Tibial artery (tissue), 4 donors: ENCODE measurements at regions of chr20 and their contacts with region 1.

Region 1: GRCh38 chr20:19692685-19693119 is 65.4 kb upstream of the RIN2 start:
- DNase-seq: peak in 1 of 2 donors; percentile 32
- H3K4me3 ChIP-seq: no peak overlapping the region
- H3K27ac ChIP-seq: no peak overlapping the region
- H3K4me1 ChIP-seq: peaks cover 0 to 15% (median 2%) of the 10 kb centered on the region in 4 donors
- H3K27me3 ChIP-seq: no peaks in the 10 kb centered on the region
- CTCF ChIP-seq: peak; percentile 86 to 93

Region 2: DNA sequence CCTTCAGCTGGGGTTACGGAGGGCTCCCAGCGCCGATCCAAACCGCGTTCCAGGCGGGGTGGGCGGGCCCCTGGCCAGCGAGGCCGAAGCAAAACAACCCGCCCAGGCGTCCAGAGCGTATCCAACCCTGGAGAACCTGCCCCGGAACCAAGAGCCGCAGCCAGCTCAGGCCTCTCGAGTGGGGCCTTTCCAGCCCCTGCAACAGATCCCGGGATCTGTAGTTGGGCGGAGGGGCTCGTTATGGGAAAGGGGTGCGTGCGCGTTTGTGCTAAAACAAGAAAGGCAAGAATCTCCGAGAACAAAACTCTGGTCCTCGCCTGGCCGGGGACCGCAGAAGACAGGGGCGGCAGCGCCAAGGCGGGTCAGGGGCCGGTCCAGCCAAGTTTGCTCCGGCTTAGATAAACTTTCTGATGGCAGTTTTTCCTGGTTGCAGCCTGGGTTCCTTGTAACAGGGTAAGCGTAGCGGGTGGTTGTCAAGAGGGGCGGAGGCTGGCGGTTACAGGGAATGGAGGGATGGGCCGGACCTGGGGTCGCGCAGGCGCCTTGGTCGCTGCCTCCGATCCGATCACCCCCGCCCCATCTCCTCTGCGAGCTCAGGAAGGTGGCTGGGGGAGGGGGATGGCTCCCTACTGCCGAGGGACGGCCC is 64.9 kb after region 1 on chr20:
- intact Hi-C with region 1: loop called (anchors 5 kb)
- DNase-seq: peak; percentile 92 to 95
- H3K4me3 ChIP-seq: peak overlapping the region; percentile 80 to 85
- H3K27ac ChIP-seq: peak overlapping the region; percentile 94 to 98
- H3K4me1 ChIP-seq: peaks cover 0 to 38% (median 25%) of the 10 kb centered on the region in 4 donors
- H3K27me3 ChIP-seq: no peaks in the 10 kb centered on the region
- CTCF ChIP-seq: no peak

Region 3: DNA sequence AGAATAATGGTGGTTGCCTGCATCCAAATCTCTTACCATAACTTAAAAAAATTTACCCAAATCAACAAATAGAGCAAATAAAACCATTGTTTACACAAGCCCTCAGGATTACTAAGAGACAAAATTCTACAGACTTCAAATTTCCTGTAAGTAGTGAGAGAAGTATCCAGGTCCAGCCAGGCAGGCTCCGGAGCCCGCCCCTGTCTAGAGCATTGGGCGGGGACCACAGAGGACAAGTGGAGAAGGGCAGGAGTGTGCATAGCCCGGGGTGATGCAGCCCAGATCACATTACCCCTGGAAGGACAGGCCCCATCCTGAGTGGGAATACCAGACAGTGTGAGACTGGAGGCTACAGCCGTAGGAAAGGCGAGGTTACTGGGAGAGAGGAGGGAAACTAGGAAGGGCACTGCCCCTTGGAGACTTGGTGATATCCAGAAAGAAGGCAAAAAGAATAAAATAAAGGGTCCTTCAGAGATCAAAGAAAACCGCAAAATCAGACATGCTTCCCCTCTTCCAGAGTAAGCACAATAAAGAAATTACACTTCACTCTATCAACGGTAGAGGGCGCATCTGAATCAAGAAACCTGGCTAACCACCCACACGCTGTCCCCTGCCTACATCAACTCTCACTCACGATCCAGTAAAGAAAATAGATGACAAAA is 91.9 kb after region 1 on chr20:
- intact Hi-C with region 1: loop called (anchors 10 kb)
- DNase-seq: peak in 1 of 2 donors; percentile 49
- H3K4me3 ChIP-seq: no peak overlapping the region
- H3K27ac ChIP-seq: peak overlapping the region; percentile 45 to 61
- H3K4me1 ChIP-seq: peaks cover 0 to 34% (median 25%) of the 10 kb centered on the region in 4 donors
- H3K27me3 ChIP-seq: no peaks in the 10 kb centered on the region
- CTCF ChIP-seq: peak; percentile 76 to 82

Region 4: GRCh38 chr20:19995220-19995863 is 302.6 kb after region 1 on chr20:
- intact Hi-C with region 1: loop called (anchors 10 kb)
- DNase-seq: no peak
- H3K4me3 ChIP-seq: no peak overlapping the region
- H3K27ac ChIP-seq: peak overlapping the region; percentile 73 to 83
- H3K4me1 ChIP-seq: peaks cover 0 to 43% (median 32%) of the 10 kb centered on the region in 4 donors
- H3K27me3 ChIP-seq: no peaks in the 10 kb centered on the region
- CTCF ChIP-seq: peak; percentile 78 to 83